ENCODE measurements at regions of chrX and their contacts with region 1.

Region 1: DNA sequence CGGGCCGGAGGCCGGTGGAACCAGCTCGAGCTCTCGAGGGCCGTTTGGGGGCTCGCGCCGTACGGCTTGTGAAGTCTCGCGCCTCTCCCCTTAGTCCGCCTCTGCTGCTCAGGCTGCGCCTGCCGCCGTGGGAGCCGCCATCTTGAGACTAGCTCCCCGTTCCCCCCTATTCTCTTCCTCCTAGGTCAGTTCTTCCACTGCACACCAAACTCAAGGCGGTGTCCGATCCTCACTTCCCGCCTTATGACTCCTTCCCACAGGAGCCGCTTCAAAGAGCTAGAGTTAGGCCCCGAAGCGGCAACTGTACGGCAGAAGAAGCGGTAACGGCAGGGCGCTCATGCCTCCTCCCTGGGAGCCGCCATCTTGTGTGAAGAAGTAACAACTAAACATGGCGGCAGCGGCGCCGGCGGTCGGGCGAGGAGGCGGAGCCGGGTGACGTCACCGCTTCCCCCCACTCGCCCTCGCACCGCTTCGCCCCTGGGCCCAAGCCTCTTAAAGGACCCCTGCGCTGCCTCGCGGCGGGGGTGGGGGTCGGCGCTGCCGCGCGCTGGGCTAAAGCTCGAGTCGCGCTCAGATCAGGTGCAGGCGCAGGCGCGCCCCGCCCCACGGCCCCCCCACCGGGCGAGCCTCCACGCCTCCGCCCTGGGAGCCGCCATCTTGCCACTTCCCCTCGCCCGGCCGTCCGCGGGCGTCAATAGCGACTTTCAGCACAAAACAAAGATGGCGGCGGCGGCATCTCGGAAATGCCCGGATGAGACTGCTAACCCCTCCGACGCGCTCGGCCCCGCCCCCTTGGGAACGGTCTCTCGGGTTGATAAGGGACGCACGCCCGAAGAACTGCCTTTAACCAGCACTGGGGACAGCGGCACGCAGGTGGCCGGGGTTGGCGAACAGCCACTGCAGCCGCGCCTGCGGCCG is at the start of gene HCFC1:
- DNase-seq: peak; percentile 90
- H3K4me3 Mint-ChIP-seq: peak within 1 kb of the TSS; percentile 100
- H3K27ac Mint-ChIP-seq: peak within 1 kb of the TSS; percentile 100
- H3K4me1 Mint-ChIP-seq: peaks cover 37% of the 10 kb centered on the region
- H3K27me3 Mint-ChIP-seq: no peaks in the 10 kb centered on the region
- total RNA-seq, gene HCFC1: 88.3 to 93.1 TPM

Region 2: DNA sequence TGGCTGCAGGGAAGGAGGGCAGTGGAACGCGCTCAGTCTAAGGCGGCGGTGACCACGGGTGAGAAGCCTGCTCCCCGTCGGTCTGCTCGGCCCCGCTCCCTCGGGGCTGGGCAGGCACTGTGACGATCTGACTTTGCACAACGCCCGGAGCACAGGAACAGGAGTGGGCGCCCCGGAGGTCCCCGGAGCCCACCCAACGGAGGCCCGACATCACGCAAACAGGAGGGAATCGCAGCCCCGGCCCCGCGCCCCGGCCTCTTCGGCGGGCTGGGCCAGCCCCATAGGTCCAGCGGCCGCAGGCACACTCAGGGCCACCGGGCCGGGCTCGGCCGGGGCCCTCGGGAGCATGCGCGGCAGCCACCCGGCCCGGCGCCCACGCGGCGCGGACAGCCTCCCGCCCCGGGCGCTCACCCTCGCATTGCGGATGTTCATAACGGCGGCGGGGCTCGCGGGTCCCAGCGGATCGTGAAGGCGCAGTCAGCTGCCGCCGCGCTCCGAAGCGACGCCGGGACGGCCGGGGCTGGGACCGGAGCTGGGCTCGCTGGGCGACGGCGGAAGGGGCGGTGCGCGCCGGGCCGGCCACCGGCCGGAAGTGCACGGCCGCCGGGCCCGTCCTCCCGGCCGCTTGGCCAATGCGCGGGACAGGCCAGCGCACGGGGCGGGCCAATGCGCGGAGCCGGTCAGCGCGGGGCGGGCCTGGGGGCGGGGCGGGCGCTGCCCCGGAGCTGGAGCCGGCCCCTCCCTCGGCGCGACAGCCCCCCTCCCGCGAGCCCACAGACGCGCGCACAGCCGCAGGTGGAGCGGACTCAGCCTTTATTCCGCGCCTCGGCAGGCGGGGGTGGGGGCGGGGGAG is 37.0 kb before region 1 on chrX and contains the start of gene NAA10:
- CTCF ChIA-PET with region 1: no interaction called
- POLR2A ChIA-PET with region 1: interaction called, 201 read pairs
- DNase-seq: peak; percentile 60
- H3K4me3 Mint-ChIP-seq: peak within 1 kb of the TSS; percentile 84
- H3K27ac Mint-ChIP-seq: peak within 1 kb of the TSS; percentile 64
- H3K4me1 Mint-ChIP-seq: peaks cover 29% of the 10 kb centered on the region
- H3K27me3 Mint-ChIP-seq: no peaks in the 10 kb centered on the region
- total RNA-seq, gene NAA10: 63.1 to 63.7 TPM

Region 3: GRCh38 chrX:153959649-153960048 is 12.1 kb before region 1 on chrX:
- CTCF ChIA-PET with region 1: no interaction called
- POLR2A ChIA-PET with region 1: interaction called, 13 read pairs
- DNase-seq: no peak
- H3K4me3 Mint-ChIP-seq: no peak overlapping the region
- H3K27ac Mint-ChIP-seq: no peak overlapping the region
- H3K4me1 Mint-ChIP-seq: peaks cover 2% of the 10 kb centered on the region
- H3K27me3 Mint-ChIP-seq: no peaks in the 10 kb centered on the region

Region 4: DNA sequence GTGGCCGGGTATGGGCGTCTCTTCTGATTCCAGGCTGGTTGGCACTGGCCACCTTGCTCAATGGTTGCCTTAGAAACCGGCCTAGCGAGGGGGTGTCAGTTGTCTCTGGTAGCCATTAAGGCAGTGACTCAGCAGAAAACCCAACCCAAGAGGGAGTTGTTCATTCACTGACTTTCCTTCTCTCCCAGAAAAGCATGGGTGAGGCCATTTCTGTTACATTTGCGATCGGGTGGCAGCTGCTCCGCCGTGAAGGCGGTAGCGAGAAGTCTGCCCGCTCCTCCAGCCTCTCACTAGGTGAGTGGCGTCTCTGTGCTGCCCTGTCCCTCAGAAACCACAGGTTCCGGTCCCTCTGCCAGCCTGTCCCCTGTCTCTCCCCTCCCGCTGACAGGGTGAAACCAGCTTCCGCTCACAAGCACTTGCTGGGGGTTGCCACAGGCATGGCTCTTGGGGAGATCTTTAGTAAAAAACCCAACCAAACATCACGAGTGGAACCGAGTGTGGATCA is 30.6 kb after region 1 on chrX:
- CTCF ChIA-PET with region 1: no interaction called
- POLR2A ChIA-PET with region 1: interaction called, 15 read pairs
- DNase-seq: peak; percentile 68
- H3K4me3 Mint-ChIP-seq: peak overlapping the region; percentile 59
- H3K27ac Mint-ChIP-seq: peak overlapping the region; percentile 90
- H3K4me1 Mint-ChIP-seq: peaks cover 22% of the 10 kb centered on the region
- H3K27me3 Mint-ChIP-seq: no peaks in the 10 kb centered on the region

Region 5: GRCh38 chrX:154063234-154063633 is 91.5 kb after region 1 on chrX:
- CTCF ChIA-PET with region 1: no interaction called
- POLR2A ChIA-PET with region 1: no interaction called
- DNase-seq: no peak
- H3K4me3 Mint-ChIP-seq: no peak overlapping the region
- H3K27ac Mint-ChIP-seq: no peak overlapping the region
- H3K4me1 Mint-ChIP-seq: peaks cover 52% of the 10 kb centered on the region
- H3K27me3 Mint-ChIP-seq: no peaks in the 10 kb centered on the region